Activated B cell treated with CpG ODN at 0.5 μM for 24 hours (primary cell): ENCODE measurements at regions of chr2 and their contacts with region 1.

Region 1: GRCh38 chr2:71100195-71100964 is 29.6 kb downstream of the MCEE start:
- DNase-seq: no peak
- ATAC-seq: no peak
- H3K4me3 Mint-ChIP-seq: no peak overlapping the region
- H3K27ac Mint-ChIP-seq: no peak overlapping the region
- H3K4me1 Mint-ChIP-seq: no peaks in the 10 kb centered on the region
- H3K27me3 Mint-ChIP-seq: no peaks in the 10 kb centered on the region
- CTCF ChIP-seq: no peak

Region 2: GRCh38 chr2:70826696-70827350 is 273.6 kb before region 1 on chr2:
- CTCF ChIA-PET with region 1: no interaction called
- POLR2A ChIA-PET with region 1: no interaction called
- intact Hi-C with region 1: no loop called
- DNase-seq: no peak
- ATAC-seq: no peak
- H3K4me3 Mint-ChIP-seq: no peak overlapping the region
- H3K27ac Mint-ChIP-seq: no peak overlapping the region
- H3K4me1 Mint-ChIP-seq: no peaks in the 10 kb centered on the region
- H3K27me3 Mint-ChIP-seq: peaks cover 15% of the 10 kb centered on the region
- CTCF ChIP-seq: no peak

Region 3: DNA sequence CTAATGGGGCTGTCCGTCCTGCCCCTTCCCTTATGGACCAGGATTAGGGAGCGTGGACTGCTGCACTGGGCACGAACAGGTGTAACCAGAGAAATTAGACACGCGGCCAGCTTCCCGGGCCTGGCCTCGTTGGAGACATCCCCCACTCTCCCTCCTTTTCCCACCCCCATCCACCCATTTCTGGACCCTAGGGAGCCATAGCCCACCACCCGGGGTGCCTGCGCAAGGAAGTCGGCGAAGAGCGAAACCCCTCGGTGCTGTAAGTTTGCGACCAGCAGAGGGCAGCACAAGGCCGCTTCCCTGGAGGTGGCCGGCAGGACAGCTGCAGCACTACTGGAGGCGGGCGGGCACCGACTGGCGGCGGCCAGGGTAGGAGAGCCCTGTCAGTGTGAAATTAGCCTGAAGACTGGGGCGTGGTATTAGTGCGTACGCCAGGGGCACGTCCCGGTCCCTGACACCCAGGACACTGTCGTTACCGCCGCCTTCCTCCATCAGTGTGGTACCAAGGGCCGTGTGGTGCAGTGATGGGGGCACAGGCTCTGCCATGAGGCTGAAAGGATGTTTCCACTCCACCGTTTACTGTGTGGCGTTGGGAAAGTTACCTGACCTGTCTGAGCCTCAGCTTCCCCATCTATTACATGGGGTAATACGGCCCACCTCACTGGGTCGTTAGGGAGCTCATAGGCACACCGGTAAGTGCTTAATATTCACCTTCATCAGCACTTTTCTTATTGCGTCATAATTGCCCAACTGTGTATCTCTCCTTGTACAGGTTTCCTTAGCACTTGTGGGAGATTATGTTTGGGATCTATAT is 228.8 kb before region 1 on chr2:
- CTCF ChIA-PET with region 1: no interaction called
- POLR2A ChIA-PET with region 1: no interaction called
- intact Hi-C with region 1: no loop called
- DNase-seq: peak; percentile 61
- ATAC-seq: peak; percentile 78
- H3K4me3 Mint-ChIP-seq: no peak overlapping the region
- H3K27ac Mint-ChIP-seq: no peak overlapping the region
- H3K4me1 Mint-ChIP-seq: peaks cover 6% of the 10 kb centered on the region
- H3K27me3 Mint-ChIP-seq: peaks cover 51% of the 10 kb centered on the region
- CTCF ChIP-seq: no peak

Region 4: DNA sequence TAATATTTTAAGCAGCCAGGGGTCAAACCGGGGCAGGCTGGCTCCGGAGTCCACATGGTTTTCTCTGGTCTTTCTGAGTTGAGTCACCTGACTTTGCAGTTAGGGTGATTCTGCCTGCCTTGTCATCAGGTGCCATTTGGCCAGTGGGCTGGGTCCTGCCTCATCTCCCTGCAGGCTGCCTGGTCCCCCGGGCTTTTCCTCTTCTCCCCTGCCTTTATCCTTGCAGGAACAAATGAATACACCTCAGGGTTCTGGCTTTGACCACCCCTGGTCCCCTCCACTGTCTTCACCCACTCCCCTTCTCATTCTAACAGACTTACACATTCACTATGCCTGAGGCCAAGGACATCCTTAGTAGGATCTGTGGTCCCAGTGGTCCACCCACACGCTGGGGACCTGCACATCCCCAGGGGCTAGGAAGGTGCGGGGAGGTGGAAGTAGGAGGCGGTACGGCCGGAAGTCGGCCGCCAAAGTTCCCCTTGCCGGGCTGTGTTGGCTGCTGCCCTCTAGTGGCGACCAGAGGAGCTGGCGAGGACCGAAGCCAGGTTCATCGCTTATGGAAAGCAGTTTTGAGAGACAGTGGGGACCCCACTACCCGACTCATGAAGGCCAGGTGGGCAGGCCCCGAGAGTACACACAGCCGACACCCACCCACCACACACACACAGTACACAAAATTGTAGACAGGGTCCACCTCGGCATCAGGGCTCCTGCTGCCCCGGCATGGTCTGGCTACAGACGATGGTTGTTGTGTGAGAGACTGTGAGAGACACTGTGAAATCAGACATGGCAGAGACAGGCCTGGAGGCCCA is 99.4 kb before region 1 on chr2:
- CTCF ChIA-PET with region 1: no interaction called
- POLR2A ChIA-PET with region 1: no interaction called
- intact Hi-C with region 1: no loop called
- DNase-seq: peak; percentile 71
- ATAC-seq: peak; percentile 98
- H3K4me3 Mint-ChIP-seq: peak overlapping the region; percentile 77
- H3K27ac Mint-ChIP-seq: peak overlapping the region; percentile 53
- H3K4me1 Mint-ChIP-seq: peaks cover 10% of the 10 kb centered on the region
- H3K27me3 Mint-ChIP-seq: peaks cover 11% of the 10 kb centered on the region
- CTCF ChIP-seq: peak; percentile 51

Region 5: DNA sequence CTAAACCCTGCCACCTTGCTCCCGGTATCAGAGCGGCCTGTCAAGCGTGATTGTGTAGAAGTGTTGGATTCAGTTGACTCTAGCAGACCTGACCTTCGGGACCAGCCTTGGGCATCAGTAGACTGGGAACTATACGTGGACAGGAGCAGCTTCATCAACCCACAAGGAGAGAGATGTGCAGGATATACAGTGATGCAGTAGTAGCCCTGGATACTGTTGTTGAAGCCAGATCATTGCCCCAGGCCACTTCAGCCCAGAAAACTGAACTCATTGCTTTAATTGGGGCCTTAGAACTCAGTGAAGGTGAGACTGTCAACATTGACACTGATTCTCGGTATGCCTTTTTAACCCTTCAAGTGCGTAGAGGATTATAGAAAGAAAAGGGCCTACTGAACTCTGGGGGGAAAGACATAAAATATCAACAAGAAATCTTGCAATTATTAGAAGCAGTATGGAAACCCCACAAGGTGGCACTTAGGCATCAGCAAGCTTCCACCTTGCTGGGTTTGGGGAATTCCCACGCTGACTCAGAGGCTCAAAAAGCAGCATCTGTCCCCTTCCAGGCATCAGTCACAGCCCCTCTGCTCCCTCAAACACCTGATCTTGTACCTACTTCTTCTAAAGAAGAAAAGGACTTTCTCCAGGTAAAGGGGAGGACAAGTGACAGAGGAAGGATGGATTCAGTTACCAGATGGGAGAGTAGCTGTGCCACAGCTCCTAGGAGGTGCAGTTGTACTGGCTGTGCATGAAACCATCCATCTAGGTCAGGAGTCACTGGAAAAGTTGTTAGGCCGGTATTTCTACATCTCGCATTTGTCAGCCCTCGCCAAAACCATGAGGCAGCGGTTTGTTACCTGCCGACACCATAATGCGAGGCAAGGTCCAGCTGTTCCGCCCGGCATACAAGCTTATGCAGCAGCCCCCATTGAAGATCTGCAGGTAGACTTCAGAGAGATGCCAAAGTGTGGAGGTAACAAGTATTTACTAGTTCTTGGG is 50.7 kb before region 1 on chr2:
- CTCF ChIA-PET with region 1: interaction called, 12 read pairs
- POLR2A ChIA-PET with region 1: no interaction called
- intact Hi-C with region 1: loop called (anchors 1 kb)
- DNase-seq: no peak
- ATAC-seq: peak; percentile 82
- H3K4me3 Mint-ChIP-seq: no peak overlapping the region
- H3K27ac Mint-ChIP-seq: no peak overlapping the region
- H3K4me1 Mint-ChIP-seq: peaks cover 7% of the 10 kb centered on the region
- H3K27me3 Mint-ChIP-seq: no peaks in the 10 kb centered on the region
- CTCF ChIP-seq: no peak

Region 6: GRCh38 chr2:71117063-71117462 is 16.7 kb after region 1 on chr2:
- CTCF ChIA-PET with region 1: no interaction called
- POLR2A ChIA-PET with region 1: no interaction called
- intact Hi-C with region 1: no loop called
- DNase-seq: no peak
- ATAC-seq: no peak
- H3K4me3 Mint-ChIP-seq: no peak overlapping the region
- H3K27ac Mint-ChIP-seq: no peak overlapping the region
- H3K4me1 Mint-ChIP-seq: no peaks in the 10 kb centered on the region
- H3K27me3 Mint-ChIP-seq: no peaks in the 10 kb centered on the region
- CTCF ChIP-seq: no peak

Region 7: GRCh38 chr2:71282495-71282894 is 182.1 kb after region 1 on chr2:
- CTCF ChIA-PET with region 1: no interaction called
- POLR2A ChIA-PET with region 1: no interaction called
- intact Hi-C with region 1: loop called (anchors 1 kb)
- DNase-seq: no peak
- ATAC-seq: no peak
- H3K4me3 Mint-ChIP-seq: no peak overlapping the region
- H3K27ac Mint-ChIP-seq: no peak overlapping the region
- H3K4me1 Mint-ChIP-seq: peaks cover 6% of the 10 kb centered on the region
- H3K27me3 Mint-ChIP-seq: peaks cover 15% of the 10 kb centered on the region
- CTCF ChIP-seq: no peak